Activated CD4-positive, alpha-beta T cell treated with anti-CD3 and anti-CD28 coated beads for 36 hours (primary cell): ENCODE measurements at regions of chr2 and their contacts with region 1.

Region 1: GRCh38 chr2:205640716-205641115 is 41.6 kb upstream of the NRP2 start:
- DNase-seq: no peak
- ATAC-seq: no peak
- H3K4me3 Mint-ChIP-seq: no peak overlapping the region
- H3K27ac Mint-ChIP-seq: no peak overlapping the region
- H3K4me1 Mint-ChIP-seq: peaks cover 15% of the 10 kb centered on the region
- H3K27me3 Mint-ChIP-seq: peaks cover 7% of the 10 kb centered on the region

Region 2: GRCh38 chr2:203918264-203918663 is 1722.5 kb before region 1 on chr2:
- CTCF ChIA-PET with region 1: no interaction called
- POLR2A ChIA-PET with region 1: interaction called, 11 read pairs
- intact Hi-C with region 1: no loop called
- DNase-seq: no peak
- ATAC-seq: no peak
- H3K4me3 Mint-ChIP-seq: no peak overlapping the region
- H3K27ac Mint-ChIP-seq: no peak overlapping the region
- H3K4me1 Mint-ChIP-seq: peaks cover 44% of the 10 kb centered on the region
- H3K27me3 Mint-ChIP-seq: no peaks in the 10 kb centered on the region

Region 3: DNA sequence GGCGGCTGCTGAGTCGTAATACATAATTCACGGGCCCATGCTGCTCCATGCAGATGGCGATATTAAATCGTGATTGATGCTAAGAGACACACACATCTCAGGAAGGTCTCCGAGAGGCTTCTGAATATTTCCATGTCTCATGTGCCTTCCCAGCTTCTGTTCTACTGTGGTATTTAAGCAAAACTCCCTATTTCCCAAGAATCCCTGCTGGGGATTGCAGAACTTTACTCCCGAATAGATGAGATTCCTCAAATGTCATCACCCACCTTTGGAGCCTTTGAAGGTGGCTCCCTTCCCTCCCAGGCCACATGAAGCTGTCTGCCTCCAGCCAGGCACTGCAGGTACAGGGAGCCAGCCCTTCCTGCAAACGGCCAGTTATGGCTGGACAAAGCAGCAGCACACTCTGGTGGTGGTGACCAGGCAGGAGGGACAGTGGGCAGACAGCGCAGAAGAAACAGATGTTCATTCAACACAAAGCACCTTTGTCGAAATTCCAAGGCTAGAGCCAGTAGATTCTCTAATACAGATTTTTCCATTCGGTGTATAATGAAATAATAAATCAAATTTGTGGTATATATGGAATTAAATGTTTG is 55.7 kb after region 1 on chr2:
- CTCF ChIA-PET with region 1: no interaction called
- POLR2A ChIA-PET with region 1: no interaction called
- intact Hi-C with region 1: no loop called
- DNase-seq: no peak
- ATAC-seq: no peak
- H3K4me3 Mint-ChIP-seq: no peak overlapping the region
- H3K27ac Mint-ChIP-seq: no peak overlapping the region
- H3K4me1 Mint-ChIP-seq: peaks cover 14% of the 10 kb centered on the region
- H3K27me3 Mint-ChIP-seq: peaks cover 3% of the 10 kb centered on the region

Region 4: GRCh38 chr2:205800773-205801172 is 160.1 kb after region 1 on chr2:
- CTCF ChIA-PET with region 1: no interaction called
- POLR2A ChIA-PET with region 1: no interaction called
- intact Hi-C with region 1: no loop called
- DNase-seq: no peak
- ATAC-seq: no peak
- H3K4me3 Mint-ChIP-seq: no peak overlapping the region
- H3K27ac Mint-ChIP-seq: no peak overlapping the region
- H3K4me1 Mint-ChIP-seq: no peaks in the 10 kb centered on the region
- H3K27me3 Mint-ChIP-seq: no peaks in the 10 kb centered on the region

Region 5: GRCh38 chr2:206435747-206436146 is 795.0 kb after region 1 on chr2:
- CTCF ChIA-PET with region 1: no interaction called
- POLR2A ChIA-PET with region 1: no interaction called
- intact Hi-C with region 1: no loop called
- DNase-seq: no peak
- ATAC-seq: no peak
- H3K4me3 Mint-ChIP-seq: no peak overlapping the region
- H3K27ac Mint-ChIP-seq: no peak overlapping the region
- H3K4me1 Mint-ChIP-seq: no peaks in the 10 kb centered on the region
- H3K27me3 Mint-ChIP-seq: peaks cover 31% of the 10 kb centered on the region